Right ventricle myocardium inferior (tissue), 1 donor: ENCODE measurements at regions of chr10 and their contacts with region 1.

Region 1: GRCh38 chr10:110643653-110644597 is at the start of gene RBM20:
- DNase-seq: peak; percentile 79
- ATAC-seq: peak; percentile 85
- total RNA-seq, gene RBM20: 103 TPM

Region 2: DNA sequence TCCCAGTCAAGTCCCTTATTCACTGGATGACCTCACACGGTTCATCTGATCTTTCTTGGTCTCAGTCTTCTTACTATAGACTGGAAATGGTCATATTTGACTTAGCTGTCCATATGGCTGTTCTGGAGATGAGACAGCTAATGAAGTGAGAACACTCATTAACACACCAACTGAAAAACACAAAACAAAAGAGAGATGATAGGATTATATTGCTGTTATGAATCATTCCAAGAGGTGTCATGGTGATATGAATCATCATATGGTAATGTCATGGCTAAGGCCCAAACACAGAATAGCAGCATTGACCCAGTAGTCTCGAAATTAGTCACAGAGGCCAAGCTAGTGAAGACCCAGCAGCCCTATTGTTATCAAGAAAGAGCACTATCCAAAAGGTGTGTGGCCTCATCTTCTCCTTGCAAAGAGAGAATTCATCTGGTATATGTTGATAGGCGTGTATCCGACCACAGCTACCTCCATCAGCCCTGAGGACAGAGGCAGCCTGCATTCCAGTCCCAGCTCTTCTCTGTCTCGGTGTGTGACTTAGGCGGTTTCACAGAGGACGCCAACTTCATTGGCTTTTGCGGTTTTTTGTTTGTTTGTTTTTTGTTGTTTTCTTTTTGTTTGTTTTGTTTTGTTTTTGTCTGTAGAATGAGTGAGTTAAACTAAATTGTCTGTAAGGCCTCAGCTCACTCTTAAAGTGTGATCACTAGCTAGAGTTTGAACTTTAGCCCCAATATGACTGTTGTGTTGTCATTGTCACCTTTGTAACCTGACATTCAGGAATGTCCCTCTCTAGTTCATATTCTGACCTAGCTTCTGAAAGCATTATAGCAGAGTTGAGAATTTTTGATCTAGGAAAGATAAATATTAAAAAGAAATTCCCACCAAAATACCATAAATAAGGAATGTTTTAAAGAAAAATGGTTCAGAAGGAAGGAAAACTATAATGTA is 130.4 kb after region 1 on chr10:
- intact Hi-C with region 1: loop called (anchors 5 kb)
- DNase-seq: no peak
- ATAC-seq: peak; percentile 33

Region 3: DNA sequence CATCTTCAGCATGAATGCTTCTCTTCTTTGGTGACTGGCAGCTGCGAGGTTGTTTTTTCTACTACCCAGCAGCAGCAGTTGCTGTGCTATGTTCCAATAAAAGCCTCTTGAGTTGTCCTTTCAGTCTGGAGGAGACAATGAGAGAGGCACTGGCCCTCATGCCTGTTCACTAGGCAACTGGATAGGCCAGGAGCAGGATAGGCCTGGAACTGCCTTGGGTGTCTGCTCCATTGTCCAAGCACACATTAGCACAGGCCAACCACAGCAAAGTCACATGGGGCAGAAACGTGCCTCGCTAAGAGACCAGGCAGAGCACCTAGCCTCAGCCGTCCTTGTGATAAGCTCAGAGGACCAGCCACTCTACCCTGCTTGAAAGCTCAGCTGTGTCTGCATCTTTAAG is 150.9 kb after region 1 on chr10:
- intact Hi-C with region 1: no loop called
- DNase-seq: no peak
- ATAC-seq: peak; percentile 90

Region 4: GRCh38 chr10:110883924-110884323 is 240.0 kb after region 1 on chr10:
- intact Hi-C with region 1: loop called (anchors 10 kb)
- DNase-seq: no peak
- ATAC-seq: no peak

Region 5: GRCh38 chr10:111323389-111323966 is 679.6 kb after region 1 on chr10:
- intact Hi-C with region 1: no loop called
- DNase-seq: no peak
- ATAC-seq: no peak